Calu3 (cell line): ENCODE measurements at regions of chr15 and their contacts with region 1.

Region 1: DNA sequence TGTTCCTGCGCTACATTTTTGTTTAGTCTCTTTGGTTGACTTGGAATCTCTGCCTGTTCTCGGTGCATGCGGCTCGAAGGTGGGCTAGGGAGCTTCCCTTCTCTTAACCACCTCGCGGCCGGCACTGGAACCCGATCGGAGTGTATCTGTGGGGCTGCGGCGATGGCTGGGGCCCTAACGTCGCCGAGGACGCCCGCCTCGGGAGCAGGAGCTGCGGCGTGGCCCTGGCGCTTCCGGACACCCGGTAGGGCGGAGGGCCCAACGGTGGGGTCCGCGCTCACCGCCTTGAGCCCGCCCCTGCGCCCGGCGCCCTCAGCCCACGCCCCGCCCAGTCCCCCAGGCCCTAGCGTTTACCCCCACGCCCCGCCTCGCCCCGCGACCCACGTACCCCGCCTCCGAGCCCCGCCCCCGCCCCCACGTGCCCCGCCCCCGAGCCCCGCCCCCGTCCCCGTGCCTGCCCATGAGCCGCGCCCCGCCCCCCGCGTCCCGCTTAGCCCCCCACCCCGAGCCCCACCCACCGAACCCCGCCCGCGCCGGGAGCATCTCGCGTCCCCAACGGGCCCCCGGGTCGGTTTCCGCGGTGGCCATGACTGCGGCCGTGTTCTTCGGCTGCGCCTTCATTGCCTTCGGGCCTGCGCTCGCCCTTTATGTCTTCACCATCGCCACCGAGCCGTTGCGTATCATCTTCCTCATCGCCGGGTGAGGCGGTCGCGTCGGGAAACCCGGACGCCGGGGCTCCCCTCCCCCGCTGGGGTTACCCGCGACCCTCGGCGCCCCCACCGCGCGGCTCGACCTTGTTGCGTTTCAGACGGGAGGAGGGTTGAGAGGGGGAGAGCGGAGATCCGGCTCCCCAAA is at the start of gene APH1B:
- DNase-seq: peak; percentile 77
- H3K4me3 Mint-ChIP-seq: peak within 1 kb of the TSS; percentile 76
- H3K27ac Mint-ChIP-seq: peak within 1 kb of the TSS; percentile 60
- H3K4me1 Mint-ChIP-seq: no peaks in the 10 kb centered on the region
- H3K27me3 Mint-ChIP-seq: no peaks in the 10 kb centered on the region
- CTCF ChIP-seq: no peak
- total RNA-seq, gene APH1B: 11.4 and 11.6 TPM in 2 replicates

Region 2: GRCh38 chr15:63166219-63166618 is 111.0 kb before region 1 on chr15:
- CTCF ChIA-PET with region 1: interaction called, 7 read pairs
- intact Hi-C with region 1: loop called (anchors 5 kb)
- DNase-seq: peak; percentile 31
- H3K4me3 Mint-ChIP-seq: no peak overlapping the region
- H3K27ac Mint-ChIP-seq: no peak overlapping the region
- H3K4me1 Mint-ChIP-seq: peaks cover 8% of the 10 kb centered on the region
- H3K27me3 Mint-ChIP-seq: no peaks in the 10 kb centered on the region
- CTCF ChIP-seq: no peak

Region 3: GRCh38 chr15:63203451-63204090 is 73.7 kb before region 1 on chr15:
- CTCF ChIA-PET with region 1: no interaction called
- intact Hi-C with region 1: loop called (anchors 5 kb)
- DNase-seq: no peak
- H3K4me3 Mint-ChIP-seq: no peak overlapping the region
- H3K27ac Mint-ChIP-seq: no peak overlapping the region
- H3K4me1 Mint-ChIP-seq: no peaks in the 10 kb centered on the region
- H3K27me3 Mint-ChIP-seq: no peaks in the 10 kb centered on the region
- CTCF ChIP-seq: no peak

Region 4: GRCh38 chr15:63370764-63371163 is 93.5 kb after region 1 on chr15:
- CTCF ChIA-PET with region 1: no interaction called
- intact Hi-C with region 1: no loop called
- DNase-seq: no peak
- H3K4me3 Mint-ChIP-seq: no peak overlapping the region
- H3K27ac Mint-ChIP-seq: peak overlapping the region; percentile 46
- H3K4me1 Mint-ChIP-seq: peaks cover 61% of the 10 kb centered on the region
- H3K27me3 Mint-ChIP-seq: no peaks in the 10 kb centered on the region
- CTCF ChIP-seq: no peak